GM10248 (cell line): ENCODE measurements at regions of chr7 and their contacts with region 1.

Region 1: GRCh38 chr7:151351027-151351426 is 9.4 kb downstream of the NUB1 start:
- DNase-seq: no peak
- CTCF ChIP-seq: peak; percentile 51

Region 2: GRCh38 chr7:151327659-151328058 is 23.4 kb before region 1 on chr7:
- CTCF ChIA-PET with region 1: interaction called, 10 read pairs
- POLR2A ChIA-PET with region 1: no interaction called
- DNase-seq: no peak
- CTCF ChIP-seq: no peak

Region 3: DNA sequence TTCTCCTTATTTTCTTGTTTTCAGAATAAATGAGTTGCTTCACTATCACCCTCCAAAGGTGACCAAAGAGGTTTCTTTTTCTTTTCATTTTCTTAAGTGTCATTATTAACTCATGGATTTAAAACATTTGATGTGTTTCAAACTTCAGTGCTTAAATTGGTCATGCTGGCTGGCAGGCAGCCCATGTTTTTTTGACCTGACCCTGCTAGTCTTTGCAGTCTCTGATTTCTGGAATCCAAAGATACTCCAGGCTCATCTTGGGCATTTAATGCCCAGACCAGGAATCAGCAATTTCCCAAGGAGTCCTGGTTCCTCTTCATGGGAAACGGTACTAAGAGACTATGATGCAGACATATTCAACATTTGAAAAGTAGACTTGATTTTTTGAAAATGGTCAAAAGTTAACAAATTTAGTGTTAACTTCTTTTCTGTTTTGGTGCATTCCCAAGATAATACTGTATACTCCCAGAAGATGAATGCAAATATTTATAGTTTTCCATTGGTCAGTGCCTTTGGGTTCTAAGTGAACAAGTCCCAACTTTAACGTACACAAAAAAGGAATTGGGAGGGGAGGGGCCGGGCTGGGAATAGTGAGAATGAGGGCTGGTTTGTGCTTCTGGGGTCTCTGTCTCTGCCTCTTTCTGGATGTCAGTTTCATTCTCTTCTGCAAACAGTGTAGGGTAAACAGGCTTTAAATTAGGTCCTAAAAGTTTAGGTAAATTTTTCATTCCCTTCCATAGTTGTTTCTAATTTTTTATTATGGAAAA is 10.3 kb after region 1 on chr7:
- CTCF ChIA-PET with region 1: interaction called, 14 read pairs
- POLR2A ChIA-PET with region 1: no interaction called
- DNase-seq: no peak
- CTCF ChIP-seq: no peak

Region 4: DNA sequence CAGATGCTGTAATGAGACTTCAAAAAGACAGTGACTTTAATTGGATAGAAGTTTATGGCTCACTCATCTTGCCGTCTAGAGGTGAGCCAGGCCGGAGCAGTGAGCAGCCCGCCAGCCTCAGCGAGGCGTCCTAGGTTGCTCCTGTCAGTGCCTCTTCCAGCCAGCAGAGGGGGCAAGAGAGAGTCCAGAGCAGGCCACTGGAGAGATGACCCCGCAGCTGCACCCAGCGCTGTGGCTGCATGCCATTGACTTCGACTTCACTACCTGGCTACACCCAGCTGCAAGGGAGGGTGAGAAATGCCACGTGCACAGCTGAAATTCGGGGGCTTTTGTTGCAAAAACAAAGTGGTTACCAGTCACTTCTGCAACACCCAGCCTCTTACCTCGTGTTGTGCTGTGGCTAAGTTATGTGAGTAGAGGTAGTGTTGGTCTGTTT is 17.1 kb after region 1 on chr7:
- CTCF ChIA-PET with region 1: interaction called, 61 read pairs
- POLR2A ChIA-PET with region 1: no interaction called
- DNase-seq: peak; percentile 84
- CTCF ChIP-seq: peak; percentile 92

Region 5: GRCh38 chr7:152025937-152026890 is 675.2 kb after region 1 on chr7:
- CTCF ChIA-PET with region 1: no interaction called
- POLR2A ChIA-PET with region 1: no interaction called
- DNase-seq: no peak
- CTCF ChIP-seq: no peak